GM23248 (cell line): ENCODE measurements at regions of chr7 and their contacts with region 1.

Region 1: DNA sequence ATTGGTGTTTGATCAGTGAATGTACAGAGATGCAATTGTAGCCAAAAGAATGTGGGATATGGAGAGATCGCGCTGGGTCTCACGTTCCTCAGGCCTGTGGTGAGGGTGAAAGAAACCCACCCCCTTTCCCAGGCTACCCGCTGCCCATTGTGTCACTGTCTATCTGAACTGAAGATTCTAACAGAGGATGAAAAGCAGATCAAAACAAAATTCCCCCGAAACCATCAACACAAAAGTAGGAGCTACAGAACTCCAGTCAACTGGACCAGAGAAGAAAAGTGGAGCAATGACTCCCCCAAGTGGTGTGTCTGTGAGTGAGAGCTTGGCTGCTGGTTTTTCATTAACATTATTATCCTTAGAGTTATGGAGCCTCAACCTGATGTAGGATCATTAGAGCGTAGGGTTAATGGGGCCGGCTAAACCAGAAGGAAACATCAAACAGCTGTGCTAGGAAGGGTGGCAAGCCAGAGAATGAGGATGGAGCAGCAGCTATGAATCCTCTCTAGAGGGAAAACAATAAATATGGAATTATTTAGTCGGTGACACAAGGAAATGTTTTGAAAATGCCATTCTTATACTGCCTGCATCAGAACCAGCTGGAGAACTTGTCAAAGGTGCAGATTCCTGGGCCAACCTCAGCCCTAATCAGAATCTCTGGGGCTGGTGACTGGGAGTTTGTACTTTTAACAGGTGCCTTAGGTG is 38.3 kb downstream of the AKR1B1 start:
- DNase-seq: peak; percentile 81
- H3K4me3 ChIP-seq: peak overlapping the region; percentile 49
- H3K27ac ChIP-seq: no peak overlapping the region
- H3K4me1 ChIP-seq: peaks cover 15% of the 10 kb centered on the region
- H3K27me3 ChIP-seq: no peaks in the 10 kb centered on the region

Region 2: GRCh38 chr7:133886086-133886485 is 534.5 kb before region 1 on chr7:
- in situ Hi-C with region 1: no loop called
- DNase-seq: no peak
- H3K4me3 ChIP-seq: no peak overlapping the region
- H3K27ac ChIP-seq: no peak overlapping the region
- H3K4me1 ChIP-seq: peaks cover 6% of the 10 kb centered on the region; the same call in 1 of the 2 replicates
- H3K27me3 ChIP-seq: no peaks in the 10 kb centered on the region

Region 3: GRCh38 chr7:134126966-134127848 is 293.4 kb before region 1 on chr7 and contains the start of gene LRGUK:
- in situ Hi-C with region 1: loop called (anchors 25 kb)
- DNase-seq: peak; percentile 93
- H3K4me3 ChIP-seq: peak within 1 kb of the TSS; percentile 78
- H3K27ac ChIP-seq: no peak within 1 kb of the TSS
- H3K4me1 ChIP-seq: no peaks in the 10 kb centered on the region
- H3K27me3 ChIP-seq: peaks cover 5% of the 10 kb centered on the region
- total RNA-seq, gene LRGUK: 0.13 TPM in 1 of 2 replicates, not detected in the other